Caco-2 (cell line): ENCODE measurements at regions of chr17 and their contacts with region 1.

Region 1: GRCh38 chr17:56960596-56961538 is at the start of gene COIL:
- DNase-seq: peak; percentile 94 to 96
- H3K4me3 ChIP-seq: peak within 1 kb of the TSS; percentile 67
- H3K4me3 Mint-ChIP-seq: peak within 1 kb of the TSS; percentile 77
- H3K27ac Mint-ChIP-seq: peak within 1 kb of the TSS; percentile 86
- H3K4me1 ChIP-seq: peaks cover 26% of the 10 kb centered on the region
- H3K4me1 Mint-ChIP-seq: peaks cover 12% of the 10 kb centered on the region
- H3K27me3 ChIP-seq: no peaks in the 10 kb centered on the region
- H3K27me3 Mint-ChIP-seq: no peaks in the 10 kb centered on the region
- CTCF ChIP-seq: peak; percentile 98
- total RNA-seq, gene COIL: 26.9 and 27.0 TPM in 2 replicates

Region 2: DNA sequence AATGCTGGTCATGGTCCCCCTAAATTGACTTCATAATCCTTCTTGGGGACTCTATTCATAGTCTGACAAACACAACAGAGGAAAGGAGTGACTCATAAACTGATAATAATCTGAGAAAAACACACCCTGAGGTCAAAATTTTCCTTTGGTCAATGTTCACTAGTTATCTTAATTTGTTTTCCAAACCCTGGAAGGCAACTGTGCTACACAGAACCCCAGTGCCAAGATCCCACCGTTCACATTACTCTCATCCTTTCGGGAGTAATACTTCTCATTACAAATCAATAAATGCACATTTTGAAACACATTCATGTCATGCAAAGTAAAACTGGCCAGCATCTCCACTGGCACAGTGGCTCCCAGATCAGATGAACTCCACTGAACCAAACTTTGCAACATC is 23.2 kb before region 1 on chr17:
- CTCF ChIA-PET with region 1: no interaction called
- POLR2A ChIA-PET with region 1: no interaction called
- intact Hi-C with region 1: no loop called
- DNase-seq: no peak
- H3K4me3 ChIP-seq: no peak overlapping the region
- H3K4me3 Mint-ChIP-seq: no peak overlapping the region
- H3K27ac Mint-ChIP-seq: no peak overlapping the region
- H3K4me1 ChIP-seq: no peaks in the 10 kb centered on the region
- H3K4me1 Mint-ChIP-seq: peaks cover 6% of the 10 kb centered on the region
- H3K27me3 ChIP-seq: no peaks in the 10 kb centered on the region
- H3K27me3 Mint-ChIP-seq: no peaks in the 10 kb centered on the region
- CTCF ChIP-seq: no peak

Region 3: DNA sequence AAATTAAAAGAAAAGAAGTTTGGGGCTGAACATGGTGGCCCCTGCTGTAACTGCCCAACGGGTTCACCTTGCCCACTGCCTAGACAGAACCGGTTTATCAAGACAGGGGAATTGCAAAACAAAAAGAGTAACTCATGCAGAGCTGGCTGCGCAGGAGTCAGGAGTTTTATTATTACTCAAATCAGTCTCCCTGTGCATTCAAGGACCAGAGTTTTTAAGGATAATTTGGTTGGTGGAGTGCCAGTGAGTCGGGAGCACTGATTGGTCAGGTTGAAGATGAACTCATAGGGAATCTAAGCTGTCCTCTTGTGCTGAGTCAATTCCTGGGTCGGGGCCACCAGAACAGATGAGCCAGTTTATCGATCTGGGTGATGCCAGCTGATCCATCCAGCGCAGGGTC is 12.7 kb after region 1 on chr17:
- CTCF ChIA-PET with region 1: interaction called, 5 read pairs
- POLR2A ChIA-PET with region 1: no interaction called
- intact Hi-C with region 1: loop called (anchors 1 kb)
- DNase-seq: peak in 1 of 2 experiments; percentile 57
- H3K4me3 ChIP-seq: no peak overlapping the region
- H3K4me3 Mint-ChIP-seq: no peak overlapping the region
- H3K27ac Mint-ChIP-seq: no peak overlapping the region
- H3K4me1 ChIP-seq: peaks cover 21% of the 10 kb centered on the region
- H3K4me1 Mint-ChIP-seq: peaks cover 25% of the 10 kb centered on the region
- H3K27me3 ChIP-seq: no peaks in the 10 kb centered on the region
- H3K27me3 Mint-ChIP-seq: no peaks in the 10 kb centered on the region
- CTCF ChIP-seq: no peak

Region 4: GRCh38 chr17:57009737-57010445 is 49.0 kb after region 1 on chr17:
- CTCF ChIA-PET with region 1: no interaction called
- POLR2A ChIA-PET with region 1: no interaction called
- intact Hi-C with region 1: loop called (anchors 2 kb)
- DNase-seq: peak; percentile 65 to 69
- H3K4me3 ChIP-seq: no peak overlapping the region
- H3K4me3 Mint-ChIP-seq: no peak overlapping the region
- H3K27ac Mint-ChIP-seq: no peak overlapping the region
- H3K4me1 ChIP-seq: no peaks in the 10 kb centered on the region
- H3K4me1 Mint-ChIP-seq: peaks cover 7% of the 10 kb centered on the region
- H3K27me3 ChIP-seq: no peaks in the 10 kb centered on the region
- H3K27me3 Mint-ChIP-seq: no peaks in the 10 kb centered on the region
- CTCF ChIP-seq: peak; percentile 77 to 86

Region 5: DNA sequence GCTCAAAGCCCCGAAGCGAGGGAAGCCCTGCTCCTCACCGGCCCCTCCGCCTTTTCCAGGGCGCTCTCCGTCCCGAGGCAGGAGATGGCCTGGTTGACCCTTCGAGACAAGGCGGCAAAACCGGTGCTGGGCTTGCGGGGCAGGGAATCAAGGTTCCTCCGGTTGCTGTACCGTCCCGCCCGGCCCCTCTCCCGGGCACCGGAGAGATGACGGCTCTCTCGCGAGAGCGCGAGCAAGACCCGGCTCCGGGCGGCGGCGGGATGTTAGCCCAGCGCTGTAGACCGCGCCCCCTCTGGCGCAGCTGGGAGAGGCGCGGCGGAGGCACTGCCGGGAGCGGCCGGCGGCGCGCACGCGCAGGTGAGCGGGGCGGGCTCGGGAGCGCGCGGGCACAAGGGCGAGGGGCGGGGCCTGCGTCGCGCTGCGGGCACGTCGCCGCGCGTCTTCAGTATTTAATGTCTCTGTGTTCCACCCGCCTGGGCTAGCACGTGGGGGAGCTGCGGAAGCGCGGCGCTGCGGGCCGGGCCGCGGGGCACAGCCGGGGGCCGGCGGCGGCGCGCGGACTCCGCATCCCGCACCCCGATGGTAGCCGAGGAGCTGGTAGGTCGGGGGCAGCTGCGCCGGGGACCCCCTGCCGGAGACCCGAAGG is 124.1 kb after region 1 on chr17 and contains the start of gene AKAP1:
- CTCF ChIA-PET with region 1: no interaction called
- POLR2A ChIA-PET with region 1: no interaction called
- intact Hi-C with region 1: loop called (anchors 10 kb)
- DNase-seq: peak; percentile 95 to 98
- H3K4me3 ChIP-seq: peak within 1 kb of the TSS; percentile 89
- H3K4me3 Mint-ChIP-seq: peak within 1 kb of the TSS; percentile 90
- H3K27ac Mint-ChIP-seq: peak within 1 kb of the TSS; percentile 90
- H3K4me1 ChIP-seq: peaks cover 21% of the 10 kb centered on the region
- H3K4me1 Mint-ChIP-seq: peaks cover 27% of the 10 kb centered on the region
- H3K27me3 ChIP-seq: no peaks in the 10 kb centered on the region
- H3K27me3 Mint-ChIP-seq: no peaks in the 10 kb centered on the region
- CTCF ChIP-seq: peak in 1 of 2 experiments; percentile 26
- total RNA-seq, gene AKAP1: 87.1 and 87.2 TPM in 2 replicates